Activated CD4-positive, alpha-beta memory T cell treated with anti-CD3 and anti-CD28 coated beads, Interleukin-2, amount 10 ng/mL, durations not matched to agents 7 days and 5 days (primary cell): ENCODE measurements at regions of chr2 and their contacts with region 1.

Region 1: DNA sequence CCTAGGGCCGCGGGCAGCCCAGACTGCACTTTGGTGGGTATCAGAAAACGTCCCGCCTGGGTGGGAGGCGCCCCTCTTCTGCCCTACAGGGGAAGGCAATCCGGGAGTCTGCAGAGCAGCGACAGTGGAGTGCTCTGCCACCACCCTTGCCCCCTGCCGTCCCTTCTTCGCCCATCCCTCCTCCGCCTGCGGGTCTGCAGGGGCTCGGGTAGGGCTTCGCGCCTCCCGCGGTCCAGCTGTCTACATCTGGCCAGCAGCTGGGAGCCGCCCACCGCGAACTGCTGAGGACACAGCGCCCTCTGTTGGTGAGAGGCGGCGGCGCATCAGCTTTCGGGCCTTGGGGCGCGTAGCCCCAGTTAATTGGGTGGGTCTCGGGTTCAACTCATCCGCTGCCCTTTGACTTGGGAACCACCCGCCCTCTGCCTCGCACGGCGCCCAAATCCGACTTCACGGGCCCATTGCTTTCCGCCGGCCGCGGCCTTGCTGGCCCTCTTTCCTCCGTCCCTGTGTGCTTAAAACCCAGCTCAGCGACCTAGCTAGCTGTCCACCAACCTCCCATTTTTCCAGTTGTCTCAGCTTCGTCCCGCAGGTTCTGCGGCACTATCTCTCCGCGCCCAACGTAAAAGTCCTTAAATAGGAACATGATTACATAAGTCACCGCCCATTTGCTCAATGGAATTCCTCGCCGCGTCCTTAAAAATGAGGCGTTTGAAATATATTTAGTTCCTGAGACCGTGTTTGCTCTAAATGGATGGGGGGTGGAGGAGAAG is 17.6 kb downstream of the WNT10A start:
- DNase-seq: peak; percentile 79
- H3K4me3 Mint-ChIP-seq: peak overlapping the region; percentile 33
- H3K27ac Mint-ChIP-seq: no peak overlapping the region
- H3K4me1 Mint-ChIP-seq: peaks cover 40% of the 10 kb centered on the region
- H3K27me3 Mint-ChIP-seq: peaks cover 65% of the 10 kb centered on the region

Region 2: DNA sequence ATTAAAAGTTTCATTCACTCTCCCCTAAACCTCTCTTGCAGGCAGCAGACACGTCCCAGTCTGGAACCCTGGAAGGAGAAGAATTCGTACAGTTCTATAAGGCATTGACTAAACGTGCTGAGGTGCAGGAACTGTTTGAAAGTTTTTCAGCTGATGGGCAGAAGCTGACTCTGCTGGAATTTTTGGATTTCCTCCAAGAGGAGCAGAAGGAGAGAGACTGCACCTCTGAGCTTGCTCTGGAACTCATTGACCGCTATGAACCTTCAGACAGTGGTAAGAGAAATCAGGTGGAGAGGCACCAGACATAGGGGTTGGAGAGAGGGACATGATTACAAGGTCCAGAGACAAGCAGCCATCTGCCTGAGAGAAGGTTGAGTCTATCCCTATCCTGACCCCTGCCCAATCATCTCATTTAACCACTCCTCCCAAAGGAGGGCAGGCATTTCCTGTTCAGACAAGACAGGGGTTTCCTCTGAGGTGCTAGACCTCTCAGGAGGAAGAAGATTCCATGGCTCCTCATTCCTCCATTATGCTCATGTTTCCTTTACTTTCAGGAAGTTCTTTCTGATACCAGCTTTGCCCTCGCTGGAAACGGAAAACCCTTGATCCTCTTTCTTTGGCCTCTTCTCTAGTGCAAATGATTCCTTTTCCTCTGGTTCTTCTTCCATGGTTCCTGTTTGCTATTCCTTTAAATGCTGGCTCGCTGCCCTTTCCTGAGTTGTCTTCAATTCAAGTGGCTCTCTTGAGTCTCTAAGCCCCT is 275.5 kb before region 1 on chr2:
- CTCF ChIA-PET with region 1: no interaction called
- POLR2A ChIA-PET with region 1: no interaction called
- DNase-seq: no peak
- H3K4me3 Mint-ChIP-seq: no peak overlapping the region
- H3K27ac Mint-ChIP-seq: no peak overlapping the region
- H3K4me1 Mint-ChIP-seq: peaks cover 2% of the 10 kb centered on the region
- H3K27me3 Mint-ChIP-seq: no peaks in the 10 kb centered on the region

Region 3: DNA sequence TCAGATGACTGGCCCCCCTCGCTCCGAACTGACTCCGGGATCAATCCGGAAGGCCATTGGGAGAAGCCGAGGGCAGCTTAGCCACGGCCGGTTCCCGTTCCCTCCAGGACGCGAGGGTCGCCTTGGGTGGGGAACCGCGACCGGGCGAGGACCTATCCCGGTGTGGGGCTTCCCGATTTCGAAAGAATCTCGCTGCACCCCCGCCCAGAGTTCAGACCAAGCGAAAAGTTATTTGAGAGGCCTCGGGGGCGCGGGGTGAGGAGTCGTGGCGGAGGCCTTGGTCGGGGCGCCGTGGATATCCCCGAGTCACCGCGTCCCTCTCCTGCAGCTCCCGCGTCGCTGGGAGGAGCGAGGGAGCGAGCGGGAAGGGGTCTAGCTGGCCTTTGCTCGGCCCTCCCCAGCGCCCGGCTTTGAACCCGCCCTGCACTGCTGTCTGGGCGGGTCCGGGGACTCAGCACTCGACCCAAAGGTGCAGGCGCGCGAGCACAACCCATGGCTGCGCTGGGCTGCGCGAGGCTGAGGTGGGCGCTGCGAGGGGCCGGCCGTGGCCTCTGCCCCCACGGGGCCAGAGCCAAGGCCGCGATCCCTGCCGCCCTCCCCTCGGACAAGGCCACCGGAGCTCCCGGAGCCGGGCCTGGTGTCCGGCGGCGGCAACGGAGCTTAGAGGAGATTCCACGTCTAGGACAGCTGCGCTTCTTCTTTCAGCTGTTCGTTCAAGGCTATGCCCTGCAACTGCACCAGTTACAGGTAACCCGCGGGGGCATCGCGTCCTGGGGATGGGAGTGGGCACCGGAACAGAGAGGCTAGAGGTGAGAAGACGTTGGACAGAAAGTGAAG is 116.4 kb before region 1 on chr2 and contains the start of gene CYP27A1:
- CTCF ChIA-PET with region 1: no interaction called
- POLR2A ChIA-PET with region 1: no interaction called
- DNase-seq: no peak
- H3K4me3 Mint-ChIP-seq: no peak within 1 kb of the TSS
- H3K27ac Mint-ChIP-seq: no peak within 1 kb of the TSS
- H3K4me1 Mint-ChIP-seq: peaks cover 2% of the 10 kb centered on the region
- H3K27me3 Mint-ChIP-seq: peaks cover 45% of the 10 kb centered on the region
- total RNA-seq, gene CYP27A1: not detected

Region 4: DNA sequence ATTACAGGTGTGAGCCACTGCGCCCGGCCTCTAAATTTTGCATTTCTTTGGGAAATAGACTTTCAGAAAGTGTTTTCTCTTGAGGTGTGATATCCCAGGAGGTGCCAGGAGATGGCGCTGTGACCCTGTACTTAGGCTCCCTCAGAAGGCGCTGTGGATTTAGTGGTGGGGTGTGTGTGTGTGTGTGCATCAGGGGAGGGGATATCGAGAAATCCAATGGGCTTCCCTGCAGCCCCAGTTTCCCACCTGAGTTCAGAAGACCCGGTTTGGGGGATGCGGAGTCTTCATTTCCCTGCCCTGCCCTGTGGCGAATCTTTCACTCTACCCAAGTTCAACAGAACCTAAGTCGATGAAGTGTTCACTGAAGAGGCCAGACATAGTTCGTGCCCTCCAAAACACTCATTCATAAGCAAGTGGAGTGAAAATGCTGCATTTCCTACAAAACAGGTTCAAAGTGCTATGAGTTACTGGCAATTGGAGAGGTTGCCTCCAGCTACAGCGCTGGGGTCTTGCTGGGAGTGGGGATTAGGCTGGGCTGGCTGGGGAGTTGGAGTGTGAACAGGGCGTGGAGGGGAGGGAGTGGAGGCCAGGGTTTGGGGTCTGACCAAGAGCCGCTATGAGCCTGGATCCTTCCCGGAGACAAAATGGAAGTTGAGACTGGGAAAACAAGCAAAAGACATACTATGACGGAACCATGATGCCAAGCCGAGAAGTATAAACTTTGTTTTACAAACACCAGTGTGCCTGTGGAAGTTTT is 45.2 kb before region 1 on chr2:
- CTCF ChIA-PET with region 1: interaction called, 39 read pairs
- POLR2A ChIA-PET with region 1: interaction called, 5 read pairs
- DNase-seq: peak; percentile 65
- H3K4me3 Mint-ChIP-seq: no peak overlapping the region
- H3K27ac Mint-ChIP-seq: no peak overlapping the region
- H3K4me1 Mint-ChIP-seq: no peaks in the 10 kb centered on the region
- H3K27me3 Mint-ChIP-seq: peaks cover 55% of the 10 kb centered on the region

Region 5: GRCh38 chr2:218870984-218871344 is 27.3 kb before region 1 on chr2:
- CTCF ChIA-PET with region 1: interaction called, 387 read pairs
- POLR2A ChIA-PET with region 1: interaction called, 101 read pairs
- DNase-seq: no peak
- H3K4me3 Mint-ChIP-seq: no peak overlapping the region
- H3K27ac Mint-ChIP-seq: no peak overlapping the region
- H3K4me1 Mint-ChIP-seq: peaks cover 14% of the 10 kb centered on the region
- H3K27me3 Mint-ChIP-seq: peaks cover 79% of the 10 kb centered on the region

Region 6: GRCh38 chr2:218885981-218886947 is 12.0 kb before region 1 on chr2:
- CTCF ChIA-PET with region 1: interaction called, 387 read pairs
- POLR2A ChIA-PET with region 1: interaction called, 101 read pairs
- DNase-seq: no peak
- H3K4me3 Mint-ChIP-seq: no peak overlapping the region
- H3K27ac Mint-ChIP-seq: no peak overlapping the region
- H3K4me1 Mint-ChIP-seq: peaks cover 10% of the 10 kb centered on the region
- H3K27me3 Mint-ChIP-seq: peaks cover 58% of the 10 kb centered on the region

Region 7: DNA sequence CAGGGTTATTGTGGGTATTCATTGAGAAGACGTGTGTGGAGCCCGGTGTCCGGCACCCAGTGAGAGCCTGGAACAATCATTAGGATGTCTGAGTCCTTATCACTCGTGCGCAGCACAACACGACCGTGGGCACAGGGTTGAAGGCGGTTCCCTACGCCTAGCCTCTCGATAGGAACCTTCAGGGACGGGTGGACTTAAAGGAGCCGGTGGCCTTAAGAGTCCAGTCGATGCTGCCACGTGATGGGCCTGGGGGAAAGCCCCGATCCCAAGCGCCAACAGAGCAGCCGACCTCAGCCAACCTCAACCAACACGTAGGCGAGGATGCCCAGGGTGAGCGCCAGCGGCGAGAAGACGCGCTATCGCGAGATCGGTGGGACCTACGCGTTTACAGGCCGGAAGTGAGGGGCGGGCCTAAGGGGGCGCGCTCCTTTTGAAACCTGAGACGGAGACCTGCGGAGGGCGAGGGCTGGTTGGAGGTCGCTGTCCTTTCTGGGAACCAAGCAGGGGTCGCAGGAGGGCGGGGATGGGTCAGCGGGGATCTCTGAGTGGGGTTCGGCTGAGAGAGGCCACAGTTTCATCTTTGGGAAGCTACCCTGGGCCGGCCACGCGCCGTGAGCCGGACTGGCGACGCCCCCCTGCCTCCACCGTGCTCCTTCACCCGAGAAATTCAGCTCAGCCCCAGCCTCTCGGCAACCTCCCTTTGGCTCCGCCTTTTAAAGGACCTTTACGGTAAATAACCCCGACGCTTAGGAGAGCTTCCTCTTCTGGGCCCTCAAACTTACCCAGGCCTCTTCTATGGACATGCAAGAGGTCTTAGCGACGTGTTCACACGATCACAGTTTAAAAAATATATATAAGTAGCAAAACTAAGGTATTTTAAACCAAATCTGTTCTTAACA is 10.7 kb after region 1 on chr2:
- CTCF ChIA-PET with region 1: interaction called, 58 read pairs
- POLR2A ChIA-PET with region 1: interaction called, 20 read pairs
- DNase-seq: peak; percentile 92
- H3K4me3 Mint-ChIP-seq: peak overlapping the region; percentile 83
- H3K27ac Mint-ChIP-seq: peak overlapping the region; percentile 72
- H3K4me1 Mint-ChIP-seq: peaks cover 22% of the 10 kb centered on the region
- H3K27me3 Mint-ChIP-seq: peaks cover 17% of the 10 kb centered on the region

Region 8: DNA sequence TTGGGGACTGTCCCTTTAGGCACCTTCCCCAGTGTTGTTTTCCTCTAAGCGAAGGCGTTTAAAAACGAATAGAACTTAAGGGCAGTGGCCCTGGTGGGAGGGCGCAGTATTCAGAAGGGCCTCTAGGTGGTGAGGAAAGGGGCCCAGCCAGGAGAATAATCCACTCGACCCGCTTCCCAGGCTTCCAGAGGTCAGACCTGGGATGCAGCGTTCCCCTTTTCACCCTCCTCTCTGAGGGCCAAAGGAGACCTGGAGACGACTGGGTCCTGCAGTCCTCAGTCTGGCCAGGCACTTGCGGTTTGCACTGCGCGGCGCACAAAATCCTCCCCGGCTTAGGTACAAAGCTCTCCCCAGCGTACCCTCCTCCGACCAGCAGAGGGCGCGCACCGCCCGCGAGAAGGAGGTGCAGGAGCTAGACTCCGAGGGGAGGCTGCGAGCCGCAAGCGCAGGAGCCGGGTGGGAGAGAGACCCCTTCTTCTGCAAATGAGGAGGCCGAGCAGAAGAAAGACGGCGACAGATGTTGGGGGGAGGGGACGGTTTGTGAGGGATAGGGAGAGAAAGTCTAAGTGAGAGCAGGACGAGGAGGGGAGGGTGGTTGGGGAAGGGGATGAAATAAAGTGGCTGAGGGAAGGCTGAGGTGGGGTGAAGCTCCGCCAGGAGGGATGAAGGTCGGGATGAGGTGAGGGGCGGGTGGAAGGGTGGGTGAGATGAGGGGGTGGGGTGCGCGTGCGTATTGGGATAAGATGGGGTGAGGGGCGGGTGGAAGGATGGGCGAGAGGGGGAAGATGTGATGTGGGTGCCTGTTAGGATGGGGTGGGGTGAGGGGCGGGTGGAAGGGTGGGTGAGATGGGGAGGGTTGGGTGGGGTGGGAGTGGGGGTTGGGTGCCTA is 81.8 kb after region 1 on chr2:
- CTCF ChIA-PET with region 1: interaction called, 10 read pairs
- POLR2A ChIA-PET with region 1: interaction called, 3 read pairs
- DNase-seq: peak; percentile 82
- H3K4me3 Mint-ChIP-seq: no peak overlapping the region
- H3K27ac Mint-ChIP-seq: no peak overlapping the region
- H3K4me1 Mint-ChIP-seq: peaks cover 19% of the 10 kb centered on the region
- H3K27me3 Mint-ChIP-seq: peaks cover 74% of the 10 kb centered on the region